A673 (cell line): ENCODE measurements at regions of chr4 and their contacts with region 1.

Region 1: DNA sequence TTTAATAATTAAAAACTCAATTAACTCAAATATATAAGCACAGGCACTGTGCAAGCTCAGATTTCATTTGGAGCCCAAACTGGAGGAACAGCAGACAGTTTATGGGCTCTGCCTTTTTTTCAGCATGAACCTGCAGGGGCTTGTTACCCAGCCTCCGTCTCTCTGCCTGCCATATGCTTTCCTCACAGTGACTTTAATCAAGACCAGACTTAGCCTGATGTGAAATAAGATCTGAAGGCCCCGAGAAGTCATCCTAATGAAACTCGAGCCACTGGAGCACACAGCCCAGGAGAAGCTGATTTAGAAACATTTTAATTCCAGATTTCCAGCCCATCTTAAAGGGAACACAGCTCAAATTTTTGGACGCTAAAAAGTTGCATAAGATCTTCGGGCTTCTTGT is 55.6 kb downstream of the SPATA18 start:
- DNase-seq: peak; percentile 60
- H3K4me3 ChIP-seq: no peak overlapping the region
- H3K27ac ChIP-seq: peak overlapping the region; percentile 45
- H3K4me1 ChIP-seq: peaks cover 18% of the 10 kb centered on the region
- H3K27me3 ChIP-seq: no peaks in the 10 kb centered on the region
- CTCF ChIP-seq: no peak

Region 2: GRCh38 chr4:52135171-52135570 is 28.5 kb after region 1 on chr4:
- CTCF ChIA-PET with region 1: no interaction called
- POLR2A ChIA-PET with region 1: no interaction called
- intact Hi-C with region 1: no loop called
- DNase-seq: no peak
- H3K4me3 ChIP-seq: no peak overlapping the region
- H3K27ac ChIP-seq: no peak overlapping the region
- H3K4me1 ChIP-seq: no peaks in the 10 kb centered on the region
- H3K27me3 ChIP-seq: no peaks in the 10 kb centered on the region
- CTCF ChIP-seq: no peak

Region 3: GRCh38 chr4:52225320-52225719 is 118.7 kb after region 1 on chr4:
- CTCF ChIA-PET with region 1: no interaction called
- POLR2A ChIA-PET with region 1: no interaction called
- intact Hi-C with region 1: loop called (anchors 5 kb)
- DNase-seq: no peak
- H3K4me3 ChIP-seq: no peak overlapping the region
- H3K27ac ChIP-seq: no peak overlapping the region
- H3K4me1 ChIP-seq: no peaks in the 10 kb centered on the region
- H3K27me3 ChIP-seq: no peaks in the 10 kb centered on the region
- CTCF ChIP-seq: no peak